ENCODE measurements at regions of chr6 and their contacts with region 1.

Region 1: GRCh38 chr6:109284675-109285074 is 97.6 kb downstream of the CD164 start:
- DNase-seq: no peak
- ATAC-seq: no peak
- H3K4me3 ChIP-seq: no peak overlapping the region
- H3K27ac ChIP-seq: no peak overlapping the region
- H3K4me1 ChIP-seq: no peaks in the 10 kb centered on the region
- H3K27me3 ChIP-seq: no peaks in the 10 kb centered on the region
- CTCF ChIP-seq: no peak

Region 2: DNA sequence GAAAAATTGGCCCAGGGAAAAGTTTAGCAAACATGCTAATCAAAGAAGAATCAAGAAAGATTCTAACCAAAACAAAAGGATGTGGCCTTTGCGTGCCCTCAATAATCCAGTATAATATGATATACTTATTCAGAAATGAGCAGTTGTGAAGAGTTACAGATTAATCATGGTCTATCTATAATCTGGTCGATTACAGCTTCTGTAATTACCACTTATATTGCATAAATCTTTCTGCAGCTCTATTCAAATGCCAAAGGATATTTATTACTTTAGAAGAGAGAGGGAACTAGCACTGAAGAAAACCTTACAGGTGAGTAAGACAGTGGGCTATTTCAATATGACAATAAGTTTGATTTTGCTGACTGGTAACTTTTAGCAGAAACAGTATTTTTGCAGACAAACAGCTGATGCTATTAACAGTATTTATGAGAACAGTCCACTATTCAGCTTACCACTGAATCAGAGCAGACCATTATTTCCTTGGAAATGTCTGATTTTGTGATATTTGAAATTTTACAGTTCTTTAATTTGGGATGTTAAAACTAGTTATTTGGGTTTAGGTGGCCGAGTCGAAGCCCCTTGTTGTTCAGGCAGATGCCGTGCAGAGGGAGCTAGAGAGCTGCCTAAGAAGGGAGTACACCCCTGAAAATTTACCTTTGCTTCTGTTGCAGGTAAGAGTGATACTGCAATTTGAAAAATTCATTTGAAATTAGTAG is 97.1 kb before region 1 on chr6:
- intact Hi-C with region 1: loop called in 1 of 2 experiments (anchors 5 kb)
- DNase-seq: peak in 1 of 2 donors; percentile 26
- ATAC-seq: peak; percentile 76 to 95 (median 89)
- H3K4me3 ChIP-seq: no peak overlapping the region
- H3K27ac ChIP-seq: no peak overlapping the region
- H3K4me1 ChIP-seq: no peaks in the 10 kb centered on the region
- H3K27me3 ChIP-seq: no peaks in the 10 kb centered on the region
- CTCF ChIP-seq: peak; percentile 94

Region 3: GRCh38 chr6:109236115-109237076 is 48.3 kb before region 1 on chr6:
- intact Hi-C with region 1: loop called in 1 of 2 experiments (anchors 10 kb)
- DNase-seq: no peak
- ATAC-seq: no peak
- H3K4me3 ChIP-seq: no peak overlapping the region
- H3K27ac ChIP-seq: no peak overlapping the region
- H3K4me1 ChIP-seq: peaks cover 25% of the 10 kb centered on the region
- H3K27me3 ChIP-seq: no peaks in the 10 kb centered on the region
- CTCF ChIP-seq: no peak

Region 4: DNA sequence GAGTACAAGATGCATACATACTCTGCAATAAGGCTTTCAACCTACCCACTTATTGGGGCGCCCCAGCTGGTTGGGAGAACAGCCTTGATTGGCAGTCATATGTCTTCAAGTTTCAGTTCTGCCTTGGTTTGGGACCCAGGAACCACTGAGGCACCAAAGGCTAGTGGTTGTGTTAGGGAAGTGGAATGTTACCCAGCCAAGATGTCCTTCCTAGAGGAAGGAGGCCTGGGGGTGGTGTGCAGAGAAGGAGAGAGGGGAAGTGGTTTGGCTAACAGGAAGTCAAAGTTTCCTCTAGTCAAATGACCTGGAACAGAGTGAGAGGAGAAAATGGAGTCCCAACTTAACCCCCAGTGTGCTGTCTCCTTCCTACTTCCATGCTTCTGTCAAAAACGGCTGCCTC is 38.1 kb after region 1 on chr6:
- intact Hi-C with region 1: no loop called
- DNase-seq: no peak
- ATAC-seq: no peak
- H3K4me3 ChIP-seq: no peak overlapping the region
- H3K27ac ChIP-seq: no peak overlapping the region
- H3K4me1 ChIP-seq: peaks cover 13% of the 10 kb centered on the region
- H3K27me3 ChIP-seq: no peaks in the 10 kb centered on the region
- CTCF ChIP-seq: no peak

Region 5: GRCh38 chr6:109455502-109456282 is 171.0 kb after region 1 on chr6 and contains the start of gene MICAL1:
- intact Hi-C with region 1: no loop called
- DNase-seq: peak; percentile 76 to 85
- ATAC-seq: peak; percentile 70 to 79 (median 78)
- H3K4me3 ChIP-seq: peak within 1 kb of the TSS; percentile 93
- H3K27ac ChIP-seq: peak within 1 kb of the TSS; percentile 83
- H3K4me1 ChIP-seq: peaks cover 25% of the 10 kb centered on the region
- H3K27me3 ChIP-seq: no peaks in the 10 kb centered on the region
- CTCF ChIP-seq: peak; percentile 35
- total RNA-seq, gene MICAL1: 3.1 to 7.0 (median 6.0) TPM

Measured in psoas muscle (tissue), 8 donors.